ENCODE measurements at regions of chr12 and their contacts with region 1.

Region 1: DNA sequence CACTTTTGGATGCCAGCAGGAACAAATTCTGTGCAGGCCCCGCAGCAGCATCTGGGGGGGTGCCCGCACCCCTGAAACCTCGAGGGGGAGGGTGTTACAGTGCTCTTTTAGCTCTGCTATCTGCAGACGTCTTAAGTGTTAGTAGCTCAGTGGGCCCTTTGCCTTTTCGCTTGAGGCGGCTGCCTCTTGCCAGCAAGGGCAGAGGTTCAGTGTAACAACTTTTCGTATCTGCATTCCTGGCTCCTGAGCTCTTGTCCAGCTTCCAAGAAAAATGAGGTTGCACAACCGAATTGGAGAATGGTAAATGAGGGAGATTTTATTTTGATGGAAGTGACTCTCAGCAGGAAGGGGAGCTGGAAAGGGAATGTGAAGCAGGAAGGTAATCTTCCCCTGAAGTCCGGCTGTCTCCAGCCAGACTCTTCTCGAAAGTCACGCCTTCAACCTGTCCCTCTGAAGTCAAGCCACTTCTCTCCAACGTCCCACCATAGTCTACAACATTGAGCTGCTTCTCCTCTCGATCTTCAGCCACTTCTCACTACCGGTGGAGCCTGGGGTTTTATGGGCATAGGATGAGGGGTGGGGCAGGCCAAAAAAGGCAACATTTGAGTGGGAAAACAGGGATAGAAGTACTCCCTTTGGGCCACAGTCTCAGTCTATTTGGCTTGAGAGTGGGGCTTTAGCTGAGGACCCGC is 17.8 kb downstream of the TAS2R50 start:
- DNase-seq: peak; percentile 69 to 71
- ATAC-seq: peak; percentile 79
- H3K4me3 ChIP-seq: no peak overlapping the region
- H3K27ac ChIP-seq: peak overlapping the region in 1 of 2 donors; percentile 89
- H3K4me1 ChIP-seq: peaks cover 0 to 2% of the 10 kb centered on the region in 2 donors
- H3K27me3 ChIP-seq: no peaks in the 10 kb centered on the region

Region 2: DNA sequence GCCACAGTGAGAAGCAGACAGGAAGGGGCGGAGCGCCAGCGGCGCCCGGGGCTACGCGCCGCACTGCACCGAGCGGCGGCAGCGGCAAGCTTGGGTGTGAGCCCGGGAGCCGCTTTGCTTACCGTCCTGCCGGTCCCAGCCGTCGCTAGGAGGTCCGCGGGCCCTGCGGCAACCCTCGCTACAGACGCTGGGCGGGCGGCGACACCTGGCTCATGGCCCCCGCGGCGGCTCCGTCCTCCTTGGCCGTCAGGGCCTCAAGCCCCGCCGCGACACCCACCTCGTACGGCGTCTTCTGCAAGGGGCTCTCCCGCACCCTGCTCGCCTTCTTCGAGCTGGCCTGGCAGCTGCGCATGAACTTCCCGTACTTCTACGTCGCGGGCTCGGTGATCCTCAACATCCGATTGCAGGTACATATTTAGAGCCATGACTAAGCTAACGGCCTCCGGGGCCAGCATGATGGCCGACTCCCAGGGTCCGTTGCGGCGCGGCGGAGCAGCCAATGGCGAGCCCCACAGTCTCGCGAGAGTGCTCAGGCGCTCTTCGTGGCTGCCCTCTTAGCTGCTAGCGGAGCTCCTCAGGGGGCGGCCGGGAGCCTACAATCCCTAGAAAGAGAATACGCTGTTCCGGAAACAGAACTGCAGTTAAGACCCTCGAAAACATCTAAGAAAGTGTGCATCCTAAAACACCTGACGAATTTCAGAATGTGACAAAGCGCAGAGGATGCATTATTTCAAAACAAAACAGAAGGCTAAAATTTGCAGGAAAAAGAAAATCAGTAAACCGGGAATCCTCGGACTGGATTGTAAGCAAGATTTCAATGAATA is 202.4 kb after region 1 on chr12 and contains the start of gene SMIM10L1:
- intact Hi-C with region 1: loop called in 1 of 2 experiments (anchors 10 kb)
- DNase-seq: peak; percentile 96 to 98
- ATAC-seq: peak; percentile 100
- H3K4me3 ChIP-seq: peak within 1 kb of the TSS; percentile 19 to 51
- H3K27ac ChIP-seq: peak within 1 kb of the TSS; percentile 67 to 79
- H3K4me1 ChIP-seq: peaks cover 2 to 6% of the 10 kb centered on the region in 2 donors
- H3K27me3 ChIP-seq: no peaks in the 10 kb centered on the region
- total RNA-seq, gene SMIM10L1: 9.9 to 12.5 TPM

Measured in aorta (tissue), 5 donors.